Breast epithelium (tissue), 4 donors: ENCODE measurements at regions of chr2 and their contacts with region 1.

Region 1: GRCh38 chr2:3187921-3188901 is 189.4 kb downstream of the EIPR1 start:
- DNase-seq: no peak
- H3K4me3 ChIP-seq: no peak overlapping the region
- H3K27ac ChIP-seq: no peak overlapping the region
- H3K4me1 ChIP-seq: no peaks in the 10 kb centered on the region
- H3K27me3 ChIP-seq: no peaks in the 10 kb centered on the region
- CTCF ChIP-seq: no peak
- POLR2A ChIP-seq: no peak

Region 2: DNA sequence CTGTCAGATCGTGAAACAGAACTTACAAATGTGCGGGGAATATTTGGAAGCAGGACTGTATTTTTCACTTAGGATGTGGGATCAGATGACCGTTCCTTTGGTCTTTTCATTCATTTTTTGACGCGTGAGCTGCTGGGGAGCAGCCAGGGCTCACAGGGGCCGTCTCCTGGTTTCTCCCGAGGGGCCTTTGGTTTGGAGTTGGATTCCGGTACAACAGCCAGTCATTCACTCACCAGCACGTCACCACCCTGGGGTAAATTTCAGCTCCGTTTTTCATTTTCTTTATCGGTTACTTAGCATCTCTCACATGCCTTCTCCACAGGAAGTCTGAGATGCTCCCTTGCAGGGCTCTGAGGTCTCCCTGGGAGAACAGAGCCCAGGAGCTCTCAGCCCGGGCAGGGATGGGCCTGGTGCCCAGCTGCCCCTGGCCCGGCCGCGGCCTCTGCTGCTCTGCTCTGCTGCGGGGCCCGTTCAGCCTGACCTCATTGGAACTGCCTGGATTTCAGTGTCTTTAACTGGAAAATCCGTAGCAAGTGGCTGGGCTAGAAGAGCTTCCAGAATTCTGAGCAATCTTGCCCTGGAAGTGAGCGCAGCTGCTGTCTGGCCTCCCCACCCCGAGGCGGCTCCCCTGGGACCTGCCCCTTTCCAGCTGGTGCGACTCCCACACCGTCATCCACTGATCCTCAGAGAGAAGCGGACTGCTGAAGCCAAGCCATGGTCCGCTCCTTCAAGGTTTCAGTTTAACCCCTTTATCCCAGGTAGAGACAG is 146.2 kb before region 1 on chr2:
- intact Hi-C with region 1: no loop called
- DNase-seq: no peak
- H3K4me3 ChIP-seq: no peak overlapping the region
- H3K27ac ChIP-seq: no peak overlapping the region
- H3K4me1 ChIP-seq: no peaks in the 10 kb centered on the region
- H3K27me3 ChIP-seq: peaks cover 0 to 6% of the 10 kb centered on the region in 2 donors
- CTCF ChIP-seq: no peak
- POLR2A ChIP-seq: no peak

Region 3: DNA sequence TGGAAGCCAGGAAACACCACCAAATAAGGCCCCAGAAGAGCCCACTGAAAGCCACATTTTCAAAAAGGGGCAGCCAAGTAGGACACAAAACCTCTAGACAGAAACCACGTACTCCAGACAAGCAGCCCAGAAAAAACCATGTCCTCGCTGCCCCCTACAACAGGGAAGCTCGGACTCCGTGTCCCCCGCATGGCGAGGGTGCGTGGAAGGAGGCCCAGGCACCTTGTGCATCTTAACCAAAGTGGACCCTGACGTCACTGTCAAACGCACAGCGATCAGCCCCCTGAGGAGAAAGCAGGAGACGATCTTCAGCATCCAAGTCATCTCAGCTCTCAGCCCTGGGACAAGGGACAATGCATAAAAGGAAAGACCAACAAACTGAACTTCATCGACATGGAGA is 21.0 kb after region 1 on chr2:
- intact Hi-C with region 1: loop called (anchors 1 kb)
- DNase-seq: no peak
- H3K4me3 ChIP-seq: no peak overlapping the region
- H3K27ac ChIP-seq: no peak overlapping the region
- H3K4me1 ChIP-seq: no peaks in the 10 kb centered on the region
- H3K27me3 ChIP-seq: no peaks in the 10 kb centered on the region
- CTCF ChIP-seq: no peak
- POLR2A ChIP-seq: no peak